ENCODE measurements at regions of chr12 and their contacts with region 1.

Region 1: GRCh38 chr12:724194-724855 is 28.1 kb upstream of the WNK1 start:
- DNase-seq: peak; percentile 30
- H3K4me3 Mint-ChIP-seq: peak overlapping the region; percentile 33
- H3K27ac Mint-ChIP-seq: peak overlapping the region; percentile 58
- H3K4me1 Mint-ChIP-seq: peaks cover 62% of the 10 kb centered on the region
- H3K27me3 Mint-ChIP-seq: no peaks in the 10 kb centered on the region

Region 2: DNA sequence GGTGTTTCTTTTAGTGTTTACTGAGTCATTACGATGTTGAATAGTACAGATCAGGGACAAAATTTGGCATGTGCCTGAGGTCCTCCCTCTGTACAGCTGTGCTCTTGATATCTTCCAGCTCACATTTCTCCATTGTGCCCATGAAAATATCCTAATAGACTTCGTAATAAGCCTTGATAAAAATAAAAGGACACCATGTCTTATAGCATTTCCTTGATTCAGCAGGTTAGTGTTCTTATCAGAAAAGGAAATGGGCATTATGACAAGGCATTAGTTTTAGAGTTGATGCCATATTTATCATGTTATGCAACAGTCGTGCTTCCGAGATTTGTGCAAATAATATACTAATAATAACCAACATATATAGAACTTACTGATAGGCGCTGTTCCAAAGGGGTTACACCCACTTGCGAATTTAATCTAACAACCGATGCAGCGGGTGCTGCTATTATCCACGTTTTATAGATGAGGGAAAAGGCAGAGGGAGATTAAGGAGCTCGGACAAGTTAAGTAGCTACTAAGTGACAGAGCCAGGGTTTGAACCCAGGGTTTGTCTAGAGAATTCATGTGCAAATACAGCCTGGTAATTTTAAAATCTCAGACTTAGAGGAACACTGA is 12.9 kb after region 1 on chr12:
- CTCF ChIA-PET with region 1: interaction called, 14 read pairs
- POLR2A ChIA-PET with region 1: interaction called, 17 read pairs
- DNase-seq: no peak
- H3K4me3 Mint-ChIP-seq: no peak overlapping the region
- H3K27ac Mint-ChIP-seq: no peak overlapping the region
- H3K4me1 Mint-ChIP-seq: peaks cover 8% of the 10 kb centered on the region
- H3K27me3 Mint-ChIP-seq: no peaks in the 10 kb centered on the region

Region 3: GRCh38 chr12:879641-880040 is 155.3 kb after region 1 on chr12:
- CTCF ChIA-PET with region 1: no interaction called
- POLR2A ChIA-PET with region 1: no interaction called
- DNase-seq: no peak
- H3K4me3 Mint-ChIP-seq: no peak overlapping the region
- H3K27ac Mint-ChIP-seq: no peak overlapping the region
- H3K4me1 Mint-ChIP-seq: no peaks in the 10 kb centered on the region
- H3K27me3 Mint-ChIP-seq: no peaks in the 10 kb centered on the region